Dorsolateral prefrontal cortex (tissue), 120 donors: ENCODE measurements at regions of chr1 and their contacts with region 1.

Region 1: GRCh38 chr1:37449936-37450335 is 24.4 kb upstream of the ZC3H12A start:
- DNase-seq: no peak
- H3K4me3 ChIP-seq: no peak overlapping the region
- H3K27ac ChIP-seq: no peak overlapping the region
- H3K27me3 ChIP-seq: peaks cover 0 to 4% (median 0%) of the 10 kb centered on the region in 45 donors
- CTCF ChIP-seq: no peak

Region 2: DNA sequence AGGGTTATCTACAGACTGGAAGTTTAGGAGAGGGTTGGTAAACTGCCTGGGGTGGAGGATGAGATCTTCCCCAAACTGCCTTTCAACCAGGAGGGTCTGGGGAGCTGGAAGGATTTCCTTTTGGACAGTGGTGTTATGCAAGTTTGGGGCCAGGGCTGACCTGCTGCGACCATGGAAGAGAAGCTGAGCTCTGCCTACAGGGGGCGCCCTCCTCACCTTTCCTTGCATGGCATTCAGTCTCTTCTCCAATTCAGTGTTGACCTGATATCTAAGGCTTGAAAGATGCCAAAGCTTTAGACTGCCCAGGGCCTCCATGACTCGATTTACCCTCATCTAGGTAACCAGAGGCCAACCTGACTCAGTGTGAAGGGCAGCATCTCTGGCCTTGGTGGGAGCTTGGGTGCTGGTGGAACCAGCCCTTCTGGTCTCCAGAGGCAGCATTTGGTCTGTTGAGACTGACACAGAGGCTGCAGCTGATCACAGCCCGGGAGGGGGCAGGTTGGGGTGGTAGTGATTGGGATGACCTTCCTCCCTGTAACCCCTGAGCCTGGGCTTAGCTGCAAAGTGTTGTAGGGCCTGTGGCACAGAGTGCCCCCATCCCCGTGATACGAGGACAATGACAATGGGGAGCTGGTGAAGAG is 585.6 kb before region 1 on chr1:
- intact Hi-C with region 1: no loop called
- DNase-seq: peak in 2 of 10 donors; percentile 29 to 32
- H3K4me3 ChIP-seq: no peak overlapping the region
- H3K27ac ChIP-seq: peak overlapping the region in 1 of 59 donors; percentile 32
- H3K27me3 ChIP-seq: peaks cover 0 to 9% (median 0%) of the 10 kb centered on the region in 45 donors
- CTCF ChIP-seq: peak in 48 of 56 donors; percentile 9 to 56 (median 38)

Region 3: GRCh38 chr1:37682334-37682987 is 232.5 kb after region 1 on chr1:
- intact Hi-C with region 1: loop called (anchors 2 to 5 kb)
- DNase-seq: peak in 9 of 10 donors; percentile 60 to 93 (median 75)
- H3K4me3 ChIP-seq: no peak overlapping the region
- H3K27ac ChIP-seq: peak overlapping the region in 2 of 59 donors; percentile 38 to 62
- H3K27me3 ChIP-seq: no peaks in the 10 kb centered on the region
- CTCF ChIP-seq: peak; percentile 85 to 99 (median 93)